ENCODE measurements at regions of chr3 and their contacts with region 1.

Region 1: GRCh38 chr3:190224863-190225692 is 97.2 kb downstream of the CLDN1 start:
- DNase-seq: peak; percentile 48
- H3K4me3 ChIP-seq: no peak overlapping the region
- H3K27ac ChIP-seq: no peak overlapping the region
- H3K4me1 ChIP-seq: peaks cover 5% of the 10 kb centered on the region
- H3K27me3 ChIP-seq: no peaks in the 10 kb centered on the region
- CTCF ChIP-seq: peak; percentile 53 to 59

Region 2: GRCh38 chr3:189927975-189928895 is 296.8 kb before region 1 on chr3:
- CTCF ChIA-PET with region 1: no interaction called
- dilution Hi-C with region 1: no loop called
- in situ Hi-C with region 1: no loop called
- intact Hi-C with region 1: no loop called
- DNase-seq: peak; percentile 83
- H3K4me3 ChIP-seq: no peak overlapping the region
- H3K27ac ChIP-seq: peak overlapping the region; percentile 58
- H3K4me1 ChIP-seq: peaks cover 17% of the 10 kb centered on the region
- H3K27me3 ChIP-seq: no peaks in the 10 kb centered on the region
- CTCF ChIP-seq: no peak

Region 3: DNA sequence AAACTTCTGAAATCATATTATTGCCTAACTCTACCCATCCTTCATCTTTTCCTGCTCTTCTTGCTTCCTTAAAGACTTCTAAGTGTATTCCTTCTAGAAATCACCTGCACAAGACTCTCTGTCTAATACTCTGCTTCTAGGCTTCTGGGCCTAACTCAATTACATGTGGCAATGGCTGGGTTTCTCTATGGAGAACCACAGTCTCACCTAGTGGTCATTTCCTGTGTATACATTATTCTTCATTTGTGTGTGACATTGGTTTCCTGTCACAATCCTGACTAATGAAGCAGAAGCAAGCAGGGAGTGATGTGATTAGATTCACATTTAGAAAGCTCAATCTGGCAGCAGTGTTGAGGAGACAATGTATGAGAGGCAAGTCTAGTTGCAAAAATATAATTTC is 114.1 kb after region 1 on chr3:
- CTCF ChIA-PET with region 1: no interaction called
- dilution Hi-C with region 1: no loop called
- in situ Hi-C with region 1: no loop called
- intact Hi-C with region 1: loop called (anchors 5 kb)
- DNase-seq: peak; percentile 78
- H3K4me3 ChIP-seq: no peak overlapping the region
- H3K27ac ChIP-seq: peak overlapping the region; percentile 77
- H3K4me1 ChIP-seq: peaks cover 33% of the 10 kb centered on the region
- H3K27me3 ChIP-seq: no peaks in the 10 kb centered on the region
- CTCF ChIP-seq: peak; percentile 26 to 43

Region 4: GRCh38 chr3:190443257-190443656 is 218.2 kb after region 1 on chr3:
- CTCF ChIA-PET with region 1: no interaction called
- dilution Hi-C with region 1: no loop called
- in situ Hi-C with region 1: loop called in 1 of 2 experiments (anchors 25 kb)
- intact Hi-C with region 1: loop called (anchors 5 kb)
- DNase-seq: no peak
- H3K4me3 ChIP-seq: no peak overlapping the region
- H3K27ac ChIP-seq: no peak overlapping the region
- H3K4me1 ChIP-seq: no peaks in the 10 kb centered on the region
- H3K27me3 ChIP-seq: no peaks in the 10 kb centered on the region
- CTCF ChIP-seq: peak; percentile 26 to 45